B cell (primary cell): ENCODE measurements at regions of chr2 and their contacts with region 1.

Region 1: GRCh38 chr2:677056-677965 is at the start of gene TMEM18:
- DNase-seq: peak; percentile 99
- ATAC-seq: peak; percentile 71
- H3K4me3 ChIP-seq: peak within 1 kb of the TSS; percentile 83 to 98 (median 91)
- H3K4me3 Mint-ChIP-seq: peak within 1 kb of the TSS; percentile 97
- H3K27ac ChIP-seq: peak within 1 kb of the TSS; percentile 97 to 100
- H3K27ac Mint-ChIP-seq: peak within 1 kb of the TSS; percentile 98
- H3K4me1 ChIP-seq: peaks cover 9 to 28% of the 10 kb centered on the region in 2 donors
- H3K4me1 Mint-ChIP-seq: peaks cover 54% of the 10 kb centered on the region
- H3K27me3 ChIP-seq: no peaks in the 10 kb centered on the region
- H3K27me3 Mint-ChIP-seq: no peaks in the 10 kb centered on the region
- CTCF ChIP-seq: peak; percentile 52
- total RNA-seq, gene TMEM18: 37.8 and 38.5 TPM in 2 replicates

Region 2: GRCh38 chr2:444937-445884 is 232.1 kb before region 1 on chr2:
- CTCF ChIA-PET with region 1: no interaction called
- POLR2A ChIA-PET with region 1: no interaction called
- intact Hi-C with region 1: loop called (anchors 5 kb)
- DNase-seq: peak; percentile 69
- ATAC-seq: peak; percentile 48
- H3K4me3 ChIP-seq: peak overlapping the region in 2 of 5 experiments; percentile 18 to 26
- H3K4me3 Mint-ChIP-seq: peak overlapping the region; percentile 59
- H3K27ac ChIP-seq: peak overlapping the region; percentile 66 to 69
- H3K27ac Mint-ChIP-seq: peak overlapping the region; percentile 90
- H3K4me1 ChIP-seq: peaks cover 59 to 71% of the 10 kb centered on the region in 2 donors
- H3K4me1 Mint-ChIP-seq: peaks cover 70% of the 10 kb centered on the region
- H3K27me3 ChIP-seq: no peaks in the 10 kb centered on the region
- H3K27me3 Mint-ChIP-seq: no peaks in the 10 kb centered on the region
- CTCF ChIP-seq: no peak

Region 3: DNA sequence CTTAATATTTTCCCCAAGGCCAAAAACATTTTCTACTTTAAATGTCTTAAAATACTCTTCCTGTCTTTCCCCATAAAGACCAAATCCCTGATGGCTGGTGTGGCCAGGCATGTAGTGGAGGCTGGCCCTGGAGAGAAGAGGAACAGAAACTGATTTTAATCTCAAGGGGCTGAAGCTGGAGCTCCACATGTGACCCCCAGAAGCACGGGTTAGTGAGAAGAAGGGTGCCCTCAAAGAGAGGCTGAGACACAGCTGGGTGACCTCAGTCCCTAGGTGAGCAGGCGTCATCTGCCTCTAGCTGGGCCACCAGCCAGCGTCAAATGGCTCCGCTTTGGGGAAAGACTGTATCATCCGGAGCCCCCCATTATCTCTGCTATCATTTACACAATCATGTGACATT is 19.2 kb after region 1 on chr2:
- CTCF ChIA-PET with region 1: interaction called, 5 read pairs
- POLR2A ChIA-PET with region 1: interaction called, 3 read pairs
- intact Hi-C with region 1: loop called (anchors 1 kb)
- DNase-seq: peak; percentile 89
- ATAC-seq: peak; percentile 99
- H3K4me3 ChIP-seq: no peak overlapping the region
- H3K4me3 Mint-ChIP-seq: peak overlapping the region; percentile 55
- H3K27ac ChIP-seq: peak overlapping the region; percentile 8 to 54
- H3K27ac Mint-ChIP-seq: peak overlapping the region; percentile 72
- H3K4me1 ChIP-seq: peaks cover 18 to 19% of the 10 kb centered on the region in 2 donors
- H3K4me1 Mint-ChIP-seq: peaks cover 31% of the 10 kb centered on the region
- H3K27me3 ChIP-seq: no peaks in the 10 kb centered on the region
- H3K27me3 Mint-ChIP-seq: peaks cover 3% of the 10 kb centered on the region
- CTCF ChIP-seq: no peak

Region 4: GRCh38 chr2:714005-714741 is 36.9 kb after region 1 on chr2:
- CTCF ChIA-PET with region 1: no interaction called
- POLR2A ChIA-PET with region 1: no interaction called
- intact Hi-C with region 1: loop called (anchors 5 kb)
- DNase-seq: peak; percentile 73
- ATAC-seq: peak; percentile 89
- H3K4me3 ChIP-seq: no peak overlapping the region
- H3K4me3 Mint-ChIP-seq: peak overlapping the region; percentile 21
- H3K27ac ChIP-seq: no peak overlapping the region
- H3K27ac Mint-ChIP-seq: peak overlapping the region; percentile 28
- H3K4me1 ChIP-seq: peaks cover 13 to 14% of the 10 kb centered on the region in 2 donors
- H3K4me1 Mint-ChIP-seq: peaks cover 15% of the 10 kb centered on the region
- H3K27me3 ChIP-seq: peaks cover 0 to 10% (median 6%) of the 10 kb centered on the region in 4 experiments
- H3K27me3 Mint-ChIP-seq: peaks cover 45% of the 10 kb centered on the region
- CTCF ChIP-seq: peak; percentile 71